Posterior vena cava (tissue), 2 donors: ENCODE measurements at regions of chr5 and their contacts with region 1.

Region 1: GRCh38 chr5:11719888-11720481 is 184.3 kb downstream of the CTNND2 start:
- DNase-seq: no peak

Region 2: GRCh38 chr5:10301842-10302610 is 1418.0 kb before region 1 on chr5:
- intact Hi-C with region 1: loop called in 1 of 2 experiments (anchors 5 kb)
- DNase-seq: no peak